Dorsolateral prefrontal cortex (tissue), 120 donors: ENCODE measurements at regions of chr4 and their contacts with region 1.

Region 1: GRCh38 chr4:3292571-3293400 is at the start of gene RGS12:
- DNase-seq: peak; percentile 93 to 97 (median 94)
- H3K4me3 ChIP-seq: peak within 1 kb of the TSS; percentile 62 to 97 (median 91)
- H3K27ac ChIP-seq: peak within 1 kb of the TSS; percentile 18 to 98 (median 91)
- H3K27me3 ChIP-seq: peaks cover 0 to 1% (median 0%) of the 10 kb centered on the region in 45 donors
- CTCF ChIP-seq: peak in 23 of 56 donors; percentile 7 to 54 (median 21)
- total RNA-seq, gene RGS12: 37.5 to 114 (median 72.2) TPM

Region 2: DNA sequence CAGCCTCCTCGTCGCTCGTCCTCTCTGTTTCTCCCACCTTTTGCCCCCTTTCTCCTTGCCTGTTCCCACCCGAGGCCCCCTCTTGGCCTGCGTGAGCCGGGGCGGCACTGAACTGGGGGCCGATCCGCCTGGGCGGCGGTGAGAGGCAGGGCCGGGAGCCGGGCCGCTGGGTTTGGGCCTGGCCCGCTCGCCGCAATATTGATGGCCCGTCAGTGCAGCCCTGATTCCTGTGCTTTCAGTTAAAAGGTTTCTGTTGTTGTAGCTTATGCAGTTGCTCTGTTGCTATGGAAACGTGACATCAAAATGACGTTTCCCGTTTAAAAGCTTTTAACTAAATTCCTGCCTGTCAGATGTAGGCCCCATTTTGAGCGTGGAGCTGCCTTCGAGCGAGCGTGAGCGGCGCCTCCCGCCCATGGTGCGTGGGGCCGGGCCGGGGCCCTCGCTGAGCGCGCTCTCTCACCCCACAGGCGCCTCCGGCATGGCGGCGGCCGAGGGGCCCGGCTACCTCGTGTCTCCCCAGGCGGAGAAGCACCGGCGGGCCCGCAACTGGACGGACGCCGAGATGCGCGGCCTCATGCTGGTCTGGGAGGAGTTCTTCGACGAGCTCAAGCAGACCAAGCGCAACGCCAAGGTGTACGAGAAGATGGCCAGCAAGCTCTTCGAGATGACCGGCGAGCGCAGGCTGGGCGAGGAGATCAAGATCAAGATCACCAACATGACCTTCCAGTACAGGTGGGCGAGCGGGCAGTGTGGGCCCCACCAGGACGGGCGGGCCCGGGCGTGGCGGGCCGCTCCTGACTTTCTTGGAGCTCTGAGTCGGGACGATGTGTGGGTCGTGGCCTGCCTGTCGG is 43.8 kb before region 1 on chr4 and contains the start of gene MSANTD1:
- intact Hi-C with region 1: no loop called
- DNase-seq: no peak
- H3K4me3 ChIP-seq: peak within 1 kb of the TSS in 11 of 59 donors; percentile 1 to 24 (median 10)
- H3K27ac ChIP-seq: peak within 1 kb of the TSS in 19 of 59 donors; percentile 6 to 67 (median 38)
- H3K27me3 ChIP-seq: no peaks in the 10 kb centered on the region
- CTCF ChIP-seq: no peak
- total RNA-seq, gene MSANTD1: 3.0 to 16.7 (median 6.9) TPM

Region 3: DNA sequence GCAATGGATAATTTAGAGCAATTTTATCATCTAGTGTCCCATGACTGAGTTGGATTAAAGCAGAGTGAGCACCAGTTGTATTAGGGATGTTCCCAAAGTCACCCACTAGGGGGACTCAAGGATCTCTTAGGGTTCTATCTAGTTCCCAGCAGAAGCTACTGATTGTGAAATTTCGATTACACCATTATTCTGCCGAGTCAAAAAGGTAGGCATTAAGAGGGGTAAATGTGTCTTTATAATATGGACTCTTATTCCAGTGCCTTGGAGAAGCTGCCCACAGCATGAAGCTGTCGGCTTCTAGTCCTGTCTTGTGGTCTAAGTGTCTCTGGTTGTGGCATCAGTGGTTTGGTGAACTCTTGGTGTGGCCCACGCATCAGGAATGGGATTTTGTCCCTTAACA is 53.4 kb after region 1 on chr4:
- intact Hi-C with region 1: loop called in 1 of 2 experiments (anchors 10 kb)
- DNase-seq: peak in 2 of 10 donors; percentile 64 to 70
- H3K4me3 ChIP-seq: peak overlapping the region in 20 of 59 donors; percentile 2 to 38 (median 24)
- H3K27ac ChIP-seq: peak overlapping the region in 8 of 59 donors; percentile 11 to 51 (median 35)
- H3K27me3 ChIP-seq: no peaks in the 10 kb centered on the region
- CTCF ChIP-seq: peak; percentile 60 to 93 (median 85)